ENCODE measurements at regions of chr18 and their contacts with region 1.

Region 1: GRCh38 chr18:11747731-11748130 is 58.7 kb downstream of the GNAL start:
- DNase-seq: no peak

Region 2: GRCh38 chr18:12507007-12507406 is 759.3 kb after region 1 on chr18:
- intact Hi-C with region 1: loop called in 1 of 2 experiments (anchors 5 kb)
- DNase-seq: no peak

Region 3: DNA sequence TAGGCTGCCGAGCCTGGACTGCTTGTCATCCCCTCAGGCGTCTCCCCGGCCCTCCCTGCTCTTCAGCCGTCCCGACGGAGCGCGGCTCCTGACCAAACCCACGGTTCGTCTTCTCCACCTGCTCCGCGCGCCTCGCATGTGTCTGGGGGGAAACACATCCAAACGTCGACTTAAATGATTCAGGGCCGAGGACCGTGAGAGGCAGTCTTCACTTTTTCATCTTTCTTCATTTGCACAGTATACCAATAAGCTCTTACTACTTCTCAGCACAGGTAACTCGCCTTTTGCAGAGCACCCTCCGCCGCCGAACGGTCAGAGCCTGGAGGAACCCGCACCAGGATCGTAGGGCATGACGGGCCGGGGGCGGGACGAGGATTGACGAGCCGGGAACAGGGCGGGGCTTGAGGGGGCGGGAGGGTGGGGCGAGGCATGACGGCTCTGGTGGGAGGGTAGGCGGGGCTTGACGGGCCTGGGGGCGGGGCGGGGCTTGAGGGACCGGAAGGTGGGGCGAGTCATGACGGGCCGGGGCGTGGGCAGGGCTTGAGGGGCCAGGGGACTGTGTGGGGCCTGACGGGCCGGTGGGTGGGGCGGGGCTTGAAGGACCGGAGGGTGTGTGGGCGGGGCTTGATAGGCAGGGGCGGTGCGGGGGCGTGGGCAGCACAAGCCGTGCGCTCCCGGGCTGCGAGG is 1199.8 kb after region 1 on chr18 and contains the start of gene SEH1L:
- intact Hi-C with region 1: no loop called
- DNase-seq: peak; percentile 100
- total RNA-seq, gene SEH1L: 31.7 to 38.6 TPM